ENCODE measurements at regions of chr1 and their contacts with region 1.

Region 1: DNA sequence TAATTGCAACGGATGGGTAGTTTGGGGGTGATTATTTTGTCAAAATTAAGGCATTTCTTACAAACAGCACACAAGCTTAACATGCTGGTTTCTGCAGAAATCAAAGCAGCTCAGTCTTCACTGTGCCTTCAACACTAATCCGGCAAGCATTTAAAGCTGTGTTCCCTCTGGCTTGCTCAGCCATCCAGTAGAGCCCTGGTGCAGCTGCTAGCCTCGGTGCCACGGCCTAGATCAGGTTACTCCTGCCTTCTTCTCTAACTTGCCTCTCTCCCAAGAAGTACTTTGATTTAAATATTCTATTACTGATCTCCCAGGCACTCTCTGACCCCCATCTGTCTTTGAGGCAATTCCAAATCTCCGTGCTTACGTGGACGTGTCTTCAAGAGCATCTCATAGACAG is 85.6 kb downstream of the GREM2 start:
- DNase-seq: peak; percentile 56
- ATAC-seq: peak; percentile 72
- H3K4me3 ChIP-seq: no peak overlapping the region
- H3K27ac ChIP-seq: no peak overlapping the region
- H3K4me1 ChIP-seq: no peaks in the 10 kb centered on the region; the same call in 1 of the 2 replicates
- H3K27me3 ChIP-seq: no peaks in the 10 kb centered on the region
- CTCF ChIP-seq: no peak
- POLR2A ChIP-seq: no peak
- RAD21 ChIP-seq: no peak

Region 2: DNA sequence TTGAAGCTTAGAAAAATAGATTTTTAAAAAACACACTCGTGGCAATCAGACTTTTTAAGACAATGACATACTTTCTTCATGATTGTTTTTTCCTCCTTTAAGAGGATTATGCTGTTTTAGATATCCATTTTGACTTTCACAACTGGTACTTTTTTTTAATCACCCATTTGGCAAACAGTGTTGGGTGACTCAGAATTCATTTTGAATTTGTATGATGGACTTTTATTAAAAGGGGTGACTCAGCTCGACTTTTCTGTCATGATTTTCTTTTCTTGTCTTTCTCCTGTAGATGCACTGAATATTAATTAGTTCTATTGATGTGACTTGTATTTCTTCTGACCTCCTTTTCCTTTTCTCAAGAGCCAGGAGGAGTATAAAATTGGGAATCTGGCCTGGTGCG is 389.9 kb before region 1 on chr1:
- CTCF ChIA-PET with region 1: no interaction called
- POLR2A ChIA-PET with region 1: no interaction called
- dilution Hi-C with region 1: no loop called
- in situ Hi-C with region 1: no loop called
- intact Hi-C with region 1: no loop called
- DNase-seq: peak; percentile 23
- ATAC-seq: no peak
- H3K4me3 ChIP-seq: no peak overlapping the region
- H3K27ac ChIP-seq: no peak overlapping the region
- H3K4me1 ChIP-seq: peaks cover 3% of the 10 kb centered on the region
- H3K27me3 ChIP-seq: no peaks in the 10 kb centered on the region
- CTCF ChIP-seq: no peak
- POLR2A ChIP-seq: no peak
- RAD21 ChIP-seq: no peak

Region 3: DNA sequence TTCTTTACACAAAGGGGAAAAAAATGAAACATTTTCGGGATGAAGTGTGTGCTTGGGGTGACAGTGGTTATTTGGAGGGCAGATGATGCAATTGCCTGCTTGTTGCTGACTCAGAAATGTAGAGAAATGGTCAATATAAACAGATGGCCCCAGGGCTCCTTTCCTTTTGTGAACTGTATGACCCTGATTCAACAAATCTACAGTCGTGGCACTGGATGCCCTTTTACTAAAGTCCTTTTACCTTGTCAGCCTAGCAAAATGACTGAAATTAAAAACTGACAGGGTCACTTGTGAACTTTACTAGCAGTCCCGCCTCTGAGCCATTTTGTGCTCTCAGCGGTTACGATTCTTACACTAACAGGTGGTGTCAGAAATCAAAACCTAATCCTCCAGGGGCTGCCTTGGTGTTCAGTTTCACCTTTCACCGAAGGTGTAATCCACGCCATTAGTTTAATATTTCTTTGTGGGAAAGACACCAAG is 35.8 kb after region 1 on chr1:
- CTCF ChIA-PET with region 1: no interaction called
- POLR2A ChIA-PET with region 1: no interaction called
- dilution Hi-C with region 1: no loop called
- in situ Hi-C with region 1: no loop called
- intact Hi-C with region 1: loop called (anchors 5 kb)
- DNase-seq: peak; percentile 74
- ATAC-seq: peak; percentile 84
- H3K4me3 ChIP-seq: no peak overlapping the region
- H3K27ac ChIP-seq: peak overlapping the region; percentile 49; the same call in 1 of the 2 replicates
- H3K4me1 ChIP-seq: peaks cover 2% of the 10 kb centered on the region
- H3K27me3 ChIP-seq: no peaks in the 10 kb centered on the region
- CTCF ChIP-seq: no peak
- POLR2A ChIP-seq: no peak
- RAD21 ChIP-seq: no peak